H1 (cell line): ENCODE measurements at regions of chr2 and their contacts with region 1.

Region 1: DNA sequence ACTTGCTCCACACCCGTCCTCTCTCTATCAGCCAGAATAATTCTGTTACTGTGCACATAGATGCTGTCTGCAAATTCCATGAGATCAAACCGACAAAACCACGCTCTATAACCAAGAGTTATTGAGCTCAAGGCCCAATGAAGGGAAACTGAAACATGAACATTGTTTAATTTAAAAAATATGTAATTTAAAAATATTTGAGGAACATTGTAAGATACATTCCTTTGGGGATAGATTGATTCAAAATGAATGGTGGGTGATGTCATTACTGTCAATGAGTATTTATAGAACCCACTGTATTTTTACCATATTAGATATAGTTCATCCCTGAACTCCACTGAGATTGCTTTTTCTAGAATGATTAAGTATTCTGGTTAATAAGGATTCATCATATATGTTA is 50.4 kb downstream of the NCKAP5 start:
- DNase-seq: no peak
- H3K4me3 ChIP-seq: no peak overlapping the region
- H3K27ac ChIP-seq: no peak overlapping the region
- H3K4me1 ChIP-seq: no peaks in the 10 kb centered on the region
- H3K27me3 ChIP-seq: peaks cover 12 to 25% (median 18%) of the 10 kb centered on the region in 4 experiments
- CTCF ChIP-seq: no peak
- EP300 ChIP-seq: no peak
- POLR2A ChIP-seq: no peak
- RAD21 ChIP-seq: no peak

Region 2: DNA sequence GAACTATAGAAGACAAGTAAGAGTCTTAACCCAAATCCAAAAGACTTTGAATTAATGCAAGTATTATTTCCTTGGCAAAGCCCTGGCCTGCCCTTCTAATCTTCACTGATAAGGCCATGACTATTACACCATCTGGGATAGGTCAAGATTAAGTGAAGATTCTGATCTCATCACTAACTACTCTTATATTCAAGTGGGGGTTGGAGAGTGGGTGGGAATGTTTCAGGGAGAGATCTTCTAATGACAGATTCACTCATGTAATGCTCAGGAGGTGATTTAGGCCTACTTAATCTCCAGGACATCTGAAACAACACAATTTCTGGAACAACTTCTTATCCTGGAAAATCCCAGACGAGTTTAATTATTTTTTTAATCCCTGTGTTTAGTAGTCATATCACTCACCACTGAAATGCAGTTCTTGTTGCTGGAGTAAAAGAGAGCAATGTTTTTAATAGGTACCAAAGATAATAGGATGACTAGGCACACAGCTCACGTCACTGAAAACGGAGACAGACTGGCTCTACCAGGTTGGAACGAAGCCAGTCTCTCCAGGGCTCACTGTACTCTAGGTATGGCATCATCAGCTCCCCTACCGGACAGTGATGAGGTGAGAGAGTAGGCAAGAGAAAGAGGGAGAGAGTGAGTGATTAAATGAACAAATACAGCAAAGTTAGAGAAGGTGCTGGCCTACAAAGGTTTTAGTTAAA is 82.8 kb before region 1 on chr2:
- CTCF ChIA-PET with region 1: no interaction called
- POLR2A ChIA-PET with region 1: no interaction called
- DNase-seq: no peak
- H3K4me3 ChIP-seq: no peak overlapping the region
- H3K27ac ChIP-seq: no peak overlapping the region
- H3K4me1 ChIP-seq: no peaks in the 10 kb centered on the region
- H3K27me3 ChIP-seq: peaks cover 0 to 1% (median 0%) of the 10 kb centered on the region in 4 experiments; a peak in 1 of 7 replicates
- CTCF ChIP-seq: no peak
- EP300 ChIP-seq: no peak
- POLR2A ChIP-seq: no peak
- RAD21 ChIP-seq: no peak

Region 3: DNA sequence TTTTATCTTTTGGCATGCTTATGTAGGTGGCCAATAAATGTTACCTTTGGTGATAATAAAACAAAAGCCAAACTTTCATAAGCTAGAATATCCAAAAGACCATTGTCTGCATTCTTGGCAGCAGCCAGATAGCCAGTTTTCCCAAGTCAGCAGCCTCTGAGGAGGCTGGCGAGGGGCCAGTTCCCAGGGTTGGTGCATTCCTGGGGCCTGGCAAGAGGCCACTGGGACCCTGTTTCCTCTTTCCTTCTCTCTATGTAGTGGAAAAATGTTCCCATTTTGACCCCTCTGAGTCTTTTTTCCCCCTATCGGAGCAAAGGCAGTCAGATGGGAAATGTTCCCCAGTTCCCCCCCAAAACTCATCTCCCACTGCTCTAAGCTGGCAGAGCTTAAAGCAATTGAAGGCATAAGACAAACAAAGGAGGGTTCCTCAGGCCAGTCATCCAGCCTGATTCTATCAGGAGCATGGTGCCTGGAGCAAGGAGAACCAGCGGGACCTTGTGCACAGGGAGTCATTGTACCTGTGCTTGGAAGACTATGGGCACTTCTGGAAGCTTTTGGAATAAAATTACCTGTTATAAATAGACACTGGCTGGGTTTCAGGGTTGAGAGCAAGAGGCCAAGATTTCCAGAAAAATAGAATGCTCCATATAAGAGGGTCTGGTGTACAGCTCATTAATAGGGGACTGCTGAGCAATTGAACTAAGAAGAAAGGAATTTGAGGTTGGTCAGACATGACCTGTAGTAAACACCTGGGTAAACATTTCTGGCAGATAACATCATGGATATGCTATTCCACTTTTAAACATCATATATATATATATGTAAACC is 13.1 kb before region 1 on chr2:
- CTCF ChIA-PET with region 1: interaction called, 27 read pairs
- POLR2A ChIA-PET with region 1: no interaction called
- DNase-seq: no peak
- H3K4me3 ChIP-seq: no peak overlapping the region
- H3K27ac ChIP-seq: no peak overlapping the region
- H3K4me1 ChIP-seq: no peaks in the 10 kb centered on the region
- H3K27me3 ChIP-seq: no peaks in the 10 kb centered on the region
- CTCF ChIP-seq: no peak
- EP300 ChIP-seq: no peak
- POLR2A ChIP-seq: no peak
- RAD21 ChIP-seq: no peak

Region 4: GRCh38 chr2:133541376-133541775 is 23.5 kb after region 1 on chr2:
- CTCF ChIA-PET with region 1: interaction called, 18 read pairs
- POLR2A ChIA-PET with region 1: interaction called, 3 read pairs
- DNase-seq: no peak
- H3K4me3 ChIP-seq: no peak overlapping the region
- H3K27ac ChIP-seq: no peak overlapping the region
- H3K4me1 ChIP-seq: no peaks in the 10 kb centered on the region
- H3K27me3 ChIP-seq: no peaks in the 10 kb centered on the region
- CTCF ChIP-seq: no peak
- EP300 ChIP-seq: no peak
- POLR2A ChIP-seq: no peak
- RAD21 ChIP-seq: no peak

Region 5: GRCh38 chr2:133561045-133561852 is 43.4 kb after region 1 on chr2:
- CTCF ChIA-PET with region 1: interaction called, 42 read pairs
- POLR2A ChIA-PET with region 1: no interaction called
- DNase-seq: no peak
- H3K4me3 ChIP-seq: no peak overlapping the region
- H3K27ac ChIP-seq: no peak overlapping the region
- H3K4me1 ChIP-seq: no peaks in the 10 kb centered on the region; a peak in 1 of 7 replicates
- H3K27me3 ChIP-seq: peaks cover 0 to 1% (median 0%) of the 10 kb centered on the region in 4 experiments; a peak in 1 of 7 replicates
- CTCF ChIP-seq: peak in 2 of 3 experiments; percentile 56 to 64; a peak in 3 of 4 replicates
- EP300 ChIP-seq: no peak
- POLR2A ChIP-seq: no peak
- RAD21 ChIP-seq: peak; percentile 77 to 80

Region 6: DNA sequence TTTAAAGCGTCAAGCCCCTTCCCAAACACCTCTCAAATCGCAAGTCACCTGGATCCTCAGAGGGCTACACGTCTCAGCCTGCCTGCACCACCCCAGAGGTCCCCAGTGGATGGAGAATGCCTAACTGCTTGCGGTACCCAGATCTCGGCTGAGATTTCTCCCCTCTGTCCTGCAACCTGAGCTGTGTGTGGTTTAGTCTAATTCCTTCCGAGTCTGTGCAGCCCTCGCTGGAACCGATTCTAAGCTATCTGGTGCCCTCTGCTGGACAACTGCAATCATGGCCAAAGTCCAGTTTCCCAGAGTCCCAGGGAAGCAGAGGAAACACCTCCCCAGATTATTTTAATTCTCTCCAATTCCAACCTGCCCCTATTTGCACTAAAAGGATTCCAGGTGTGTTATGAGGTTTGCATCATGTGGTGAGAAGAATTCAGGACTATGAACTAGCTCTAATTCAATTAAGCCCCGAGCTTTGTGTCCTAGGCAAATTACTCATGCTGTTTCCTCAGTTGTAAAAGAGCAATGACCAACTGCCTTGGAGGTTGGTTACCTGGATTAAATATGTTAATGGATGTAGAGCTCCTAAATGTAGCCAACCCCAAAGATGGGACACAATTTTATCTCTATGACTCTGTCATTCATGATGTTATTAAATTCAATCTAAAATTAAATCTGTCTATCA is 326.5 kb after region 1 on chr2:
- CTCF ChIA-PET with region 1: interaction called, 28 read pairs
- POLR2A ChIA-PET with region 1: no interaction called
- DNase-seq: peak; percentile 19 to 82
- H3K4me3 ChIP-seq: no peak overlapping the region
- H3K27ac ChIP-seq: no peak overlapping the region
- H3K4me1 ChIP-seq: no peaks in the 10 kb centered on the region
- H3K27me3 ChIP-seq: no peaks in the 10 kb centered on the region; a peak in 1 of 7 replicates
- CTCF ChIP-seq: peak; percentile 77 to 84 (median 82)
- EP300 ChIP-seq: no peak
- POLR2A ChIP-seq: no peak
- RAD21 ChIP-seq: peak; percentile 97 to 98